ENCODE measurements at regions of chr12 and their contacts with region 1.

Region 1: DNA sequence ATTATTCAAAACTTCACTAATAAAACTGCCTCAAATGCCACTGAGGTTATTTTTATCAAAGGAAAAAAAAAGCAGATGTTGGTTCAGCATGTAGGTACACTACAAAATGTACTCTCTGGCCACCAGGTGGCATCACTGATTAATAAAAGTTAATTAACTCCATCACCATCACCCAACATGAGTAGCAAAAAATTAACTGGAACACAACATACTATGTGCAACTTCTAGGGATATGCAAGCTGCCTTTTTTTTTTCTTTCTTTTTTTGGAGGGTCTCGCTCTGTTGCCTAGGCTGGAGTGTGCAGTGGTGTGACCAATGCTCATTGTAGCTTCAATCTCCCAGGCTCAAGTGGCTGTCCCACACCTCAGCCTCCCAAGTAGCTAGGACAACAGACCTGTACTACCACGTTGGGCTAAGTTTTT is 43.8 kb upstream of the NR2C1 start:
- DNase-seq: no peak
- H3K4me3 ChIP-seq: peak overlapping the region in 1 of 3 experiments; percentile 56
- H3K27ac ChIP-seq: peak overlapping the region; percentile 99
- H3K4me1 ChIP-seq: peaks cover 44% of the 10 kb centered on the region
- H3K27me3 ChIP-seq: no peaks in the 10 kb centered on the region
- CTCF ChIP-seq: peak; percentile 67 to 71

Region 2: GRCh38 chr12:94980577-94980976 is 136.6 kb before region 1 on chr12:
- CTCF ChIA-PET with region 1: no interaction called
- dilution Hi-C with region 1: no loop called
- in situ Hi-C with region 1: no loop called
- intact Hi-C with region 1: no loop called
- DNase-seq: no peak
- H3K4me3 ChIP-seq: no peak overlapping the region
- H3K27ac ChIP-seq: no peak overlapping the region
- H3K4me1 ChIP-seq: peaks cover 13% of the 10 kb centered on the region
- H3K27me3 ChIP-seq: no peaks in the 10 kb centered on the region
- CTCF ChIP-seq: peak; percentile 1 to 10

Region 3: DNA sequence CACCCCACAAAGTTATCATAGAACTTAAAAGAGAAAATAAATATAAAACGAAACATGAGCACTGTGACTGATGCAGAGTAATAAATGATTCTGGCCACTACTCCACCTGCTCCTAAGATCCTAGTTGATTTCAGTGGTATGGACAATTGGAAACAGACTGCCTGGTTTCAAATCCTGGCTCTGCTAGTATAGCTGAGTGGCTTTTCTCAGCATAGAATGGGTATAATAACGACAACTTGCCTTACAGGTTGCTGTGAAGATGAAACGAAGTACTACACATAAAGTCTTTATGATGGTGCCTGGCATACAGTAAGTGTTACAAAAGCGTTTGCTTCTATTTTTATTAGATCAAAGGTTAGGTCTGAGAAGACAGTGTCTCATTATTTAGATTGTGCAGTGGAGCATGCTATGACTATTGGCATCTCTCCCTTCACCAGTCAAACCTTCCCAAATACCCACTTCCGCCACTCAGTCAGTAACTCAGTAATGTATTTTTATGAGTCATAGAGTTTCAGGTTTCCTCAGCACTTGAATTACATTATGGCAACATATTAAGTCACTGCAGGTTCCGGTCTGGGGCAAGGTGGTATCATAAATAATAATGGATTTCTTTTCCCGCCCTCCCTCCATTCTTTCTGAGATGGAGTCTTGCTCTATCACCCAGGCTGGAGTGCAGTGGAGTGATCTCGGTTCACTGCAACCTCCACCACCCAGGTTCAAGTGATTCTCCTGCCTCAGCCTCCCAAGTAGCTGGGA is 14.1 kb before region 1 on chr12:
- CTCF ChIA-PET with region 1: no interaction called
- dilution Hi-C with region 1: no loop called
- in situ Hi-C with region 1: no loop called
- intact Hi-C with region 1: loop called (anchors 1 kb)
- DNase-seq: peak; percentile 98
- H3K4me3 ChIP-seq: no peak overlapping the region
- H3K27ac ChIP-seq: peak overlapping the region; percentile 78
- H3K4me1 ChIP-seq: peaks cover 22% of the 10 kb centered on the region
- H3K27me3 ChIP-seq: no peaks in the 10 kb centered on the region
- CTCF ChIP-seq: no peak

Region 4: DNA sequence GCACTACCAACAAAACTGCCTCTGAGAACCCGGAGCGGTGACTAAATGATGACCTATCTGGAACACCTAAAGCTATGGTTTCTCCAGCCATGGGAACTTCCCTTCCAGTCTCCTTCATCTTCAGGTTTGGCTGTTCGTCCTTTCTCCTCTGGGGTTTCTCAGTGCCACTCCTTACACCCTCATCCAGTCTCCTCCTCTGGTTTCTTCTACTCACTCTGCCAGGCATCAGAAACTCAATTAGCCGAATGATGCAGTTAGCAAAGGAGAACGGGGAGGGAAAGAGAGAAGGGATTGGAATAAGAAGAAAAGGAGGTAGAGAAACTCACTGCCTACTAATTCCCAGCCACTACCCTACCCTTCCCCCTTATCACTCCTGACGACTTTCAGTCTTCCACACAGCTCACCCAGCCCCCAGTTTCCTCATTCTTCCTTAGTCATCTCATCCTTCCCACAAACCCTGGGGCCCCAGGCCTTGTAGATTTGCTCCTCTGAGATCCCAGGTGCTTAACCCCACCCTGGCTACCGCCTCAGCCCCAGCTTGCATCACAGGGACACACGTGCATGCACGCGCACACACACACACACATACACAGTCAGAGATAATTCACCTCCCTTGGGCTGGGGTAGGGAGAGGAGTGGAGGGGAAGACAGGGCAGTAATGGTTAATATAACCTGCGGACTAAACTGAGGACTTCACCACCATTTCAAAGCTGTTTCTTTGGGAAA is 87.1 kb after region 1 on chr12:
- CTCF ChIA-PET with region 1: no interaction called
- dilution Hi-C with region 1: no loop called
- in situ Hi-C with region 1: loop called in 1 of 2 experiments (anchors 5 kb)
- intact Hi-C with region 1: loop called (anchors 1 kb)
- DNase-seq: peak; percentile 100
- H3K4me3 ChIP-seq: peak overlapping the region; percentile 23 to 53 (median 38)
- H3K27ac ChIP-seq: peak overlapping the region; percentile 100
- H3K4me1 ChIP-seq: peaks cover 53% of the 10 kb centered on the region
- H3K27me3 ChIP-seq: no peaks in the 10 kb centered on the region
- CTCF ChIP-seq: no peak

Region 5: GRCh38 chr12:95473884-95474659 is 356.9 kb after region 1 on chr12 and contains the start of gene METAP2:
- CTCF ChIA-PET with region 1: no interaction called
- dilution Hi-C with region 1: no loop called
- in situ Hi-C with region 1: loop called in 1 of 2 experiments (anchors 25 kb)
- intact Hi-C with region 1: loop called (anchors 5 kb)
- DNase-seq: peak; percentile 98
- H3K4me3 ChIP-seq: peak within 1 kb of the TSS; percentile 69 to 99 (median 89)
- H3K27ac ChIP-seq: peak within 1 kb of the TSS; percentile 93
- H3K4me1 ChIP-seq: peaks cover 5% of the 10 kb centered on the region
- H3K27me3 ChIP-seq: no peaks in the 10 kb centered on the region
- CTCF ChIP-seq: no peak
- total RNA-seq, gene METAP2: 42.0 to 89.8 TPM

Region 6: DNA sequence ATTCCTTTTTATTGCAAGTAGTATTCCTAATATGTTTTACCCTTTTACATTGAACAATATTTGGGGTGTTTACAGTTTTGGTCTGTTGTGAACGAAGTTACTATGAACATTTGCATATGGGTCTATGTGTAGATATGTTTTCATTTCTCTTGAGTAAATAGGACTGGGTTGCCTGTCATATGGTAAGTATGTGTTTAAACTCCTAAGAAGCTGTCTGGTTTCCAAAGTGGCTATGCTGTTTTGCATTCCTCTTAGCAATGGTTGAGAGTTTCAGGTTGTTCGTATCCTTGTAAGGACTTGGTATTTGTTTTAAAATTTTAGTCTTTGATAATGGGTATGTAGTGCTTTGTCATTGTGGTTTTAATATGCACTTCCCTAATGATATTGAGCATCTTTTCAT is 363.0 kb after region 1 on chr12:
- CTCF ChIA-PET with region 1: no interaction called
- dilution Hi-C with region 1: no loop called
- in situ Hi-C with region 1: loop called in 1 of 2 experiments (anchors 25 kb)
- intact Hi-C with region 1: no loop called
- DNase-seq: no peak
- H3K4me3 ChIP-seq: no peak overlapping the region
- H3K27ac ChIP-seq: no peak overlapping the region
- H3K4me1 ChIP-seq: peaks cover 5% of the 10 kb centered on the region
- H3K27me3 ChIP-seq: no peaks in the 10 kb centered on the region
- CTCF ChIP-seq: no peak

Region 7: GRCh38 chr12:95532851-95533250 is 415.7 kb after region 1 on chr12:
- CTCF ChIA-PET with region 1: interaction called, 8 read pairs
- dilution Hi-C with region 1: no loop called
- in situ Hi-C with region 1: no loop called
- intact Hi-C with region 1: loop called (anchors 1 kb)
- DNase-seq: peak; percentile 62
- H3K4me3 ChIP-seq: no peak overlapping the region
- H3K27ac ChIP-seq: no peak overlapping the region
- H3K4me1 ChIP-seq: peaks cover 5% of the 10 kb centered on the region
- H3K27me3 ChIP-seq: no peaks in the 10 kb centered on the region
- CTCF ChIP-seq: no peak

Measured in mammary epithelial cell (primary cell).